ENCODE measurements at regions of chr17 and their contacts with region 1.

Region 1: GRCh38 chr17:48068491-48068961 is 20.4 kb downstream of the NFE2L1 start:
- DNase-seq: no peak
- H3K4me3 ChIP-seq: no peak overlapping the region
- H3K27ac ChIP-seq: no peak overlapping the region
- H3K4me1 ChIP-seq: peaks cover 14% of the 10 kb centered on the region
- H3K27me3 ChIP-seq: no peaks in the 10 kb centered on the region
- CTCF ChIP-seq: peak; percentile 34 to 37
- POLR2A ChIP-seq: no peak

Region 2: DNA sequence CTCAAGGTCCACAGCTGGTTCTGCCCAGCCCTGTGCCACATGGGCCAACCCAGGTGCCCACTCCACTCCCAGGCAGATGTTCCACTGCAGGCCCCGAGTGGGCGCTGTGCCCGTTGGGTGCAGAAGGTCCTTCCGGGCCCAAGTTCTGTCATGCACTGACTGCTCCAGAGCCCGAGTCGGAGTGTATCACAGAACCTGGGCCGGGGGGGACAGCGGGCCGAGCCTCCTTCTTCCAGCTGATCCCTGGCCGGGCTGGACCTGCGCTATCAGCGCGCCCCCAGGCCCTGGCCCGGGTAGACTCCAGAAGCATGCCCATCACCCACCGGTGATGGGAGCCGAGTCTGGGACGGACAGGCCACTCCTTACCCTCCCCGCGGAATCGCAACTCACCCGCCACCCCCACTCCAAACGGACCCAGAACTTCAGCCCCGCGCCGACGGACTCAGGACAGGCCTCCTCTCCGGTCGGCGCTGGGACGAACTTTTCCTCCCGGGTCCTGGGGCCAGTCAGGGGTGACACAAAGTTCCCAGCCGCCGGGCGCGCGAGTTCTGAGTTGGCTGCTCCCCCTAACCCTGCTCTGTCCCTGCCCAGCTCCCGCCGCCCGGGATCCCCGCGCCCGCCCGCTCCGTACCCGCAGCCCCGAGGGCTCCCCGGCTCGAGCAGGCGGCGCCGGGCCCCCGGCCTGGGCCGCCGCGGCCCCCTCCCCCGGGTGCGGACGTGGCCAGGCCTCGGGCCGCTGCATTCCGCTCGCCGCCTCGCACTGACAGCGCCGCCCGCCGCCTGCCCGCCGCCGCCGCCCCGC is 31.3 kb before region 1 on chr17 and contains the start of gene COPZ2:
- CTCF ChIA-PET with region 1: interaction called, 10 read pairs
- POLR2A ChIA-PET with region 1: no interaction called
- dilution Hi-C with region 1: no loop called
- intact Hi-C with region 1: no loop called
- DNase-seq: peak; percentile 51
- H3K4me3 ChIP-seq: peak within 1 kb of the TSS; percentile 52 to 60 (median 57)
- H3K27ac ChIP-seq: peak within 1 kb of the TSS; percentile 4
- H3K4me1 ChIP-seq: peaks cover 7% of the 10 kb centered on the region
- H3K27me3 ChIP-seq: no peaks in the 10 kb centered on the region
- CTCF ChIP-seq: peak; percentile 48 to 72
- POLR2A ChIP-seq: no peak
- total RNA-seq, gene COPZ2: 12.5 and 16.3 TPM in 2 replicates

Region 3: GRCh38 chr17:48055442-48056237 is 12.9 kb before region 1 on chr17:
- CTCF ChIA-PET with region 1: interaction called, 23 read pairs
- POLR2A ChIA-PET with region 1: no interaction called
- dilution Hi-C with region 1: no loop called
- intact Hi-C with region 1: no loop called
- DNase-seq: no peak
- H3K4me3 ChIP-seq: no peak overlapping the region
- H3K27ac ChIP-seq: no peak overlapping the region
- H3K4me1 ChIP-seq: peaks cover 41% of the 10 kb centered on the region
- H3K27me3 ChIP-seq: no peaks in the 10 kb centered on the region
- CTCF ChIP-seq: no peak
- POLR2A ChIP-seq: no peak

Measured in endothelial cell of umbilical vein (primary cell).